Endothelial cell of umbilical vein (primary cell): ENCODE measurements at regions of chr22 and their contacts with region 1.

Region 1: GRCh38 chr22:36239401-36240171 is at the start of gene APOL2:
- DNase-seq: peak; percentile 93
- H3K4me3 ChIP-seq: peak within 1 kb of the TSS; percentile 48 to 82 (median 67)
- H3K27ac ChIP-seq: peak within 1 kb of the TSS; percentile 31
- H3K4me1 ChIP-seq: peaks cover 16% of the 10 kb centered on the region
- H3K27me3 ChIP-seq: no peaks in the 10 kb centered on the region
- CTCF ChIP-seq: peak; percentile 54 to 80
- POLR2A ChIP-seq: peak; percentile 84
- total RNA-seq, gene APOL2: 37.6 and 41.9 TPM in 2 replicates

Region 2: GRCh38 chr22:36110306-36110881 is 129.2 kb before region 1 on chr22:
- CTCF ChIA-PET with region 1: no interaction called
- POLR2A ChIA-PET with region 1: no interaction called
- dilution Hi-C with region 1: no loop called
- intact Hi-C with region 1: no loop called
- DNase-seq: no peak
- H3K4me3 ChIP-seq: no peak overlapping the region
- H3K27ac ChIP-seq: no peak overlapping the region
- H3K4me1 ChIP-seq: no peaks in the 10 kb centered on the region
- H3K27me3 ChIP-seq: peaks cover 7 to 9% of the 10 kb centered on the region in 2 experiments
- CTCF ChIP-seq: no peak
- POLR2A ChIP-seq: no peak

Region 3: GRCh38 chr22:36194971-36195370 is 44.6 kb before region 1 on chr22:
- CTCF ChIA-PET with region 1: interaction called, 18 read pairs
- POLR2A ChIA-PET with region 1: no interaction called
- dilution Hi-C with region 1: no loop called
- intact Hi-C with region 1: no loop called
- DNase-seq: peak; percentile 74
- H3K4me3 ChIP-seq: no peak overlapping the region
- H3K27ac ChIP-seq: no peak overlapping the region
- H3K4me1 ChIP-seq: peaks cover 33% of the 10 kb centered on the region
- H3K27me3 ChIP-seq: peaks cover 0 to 6% of the 10 kb centered on the region in 2 experiments
- CTCF ChIP-seq: peak; percentile 68 to 76
- POLR2A ChIP-seq: no peak

Region 4: GRCh38 chr22:36201630-36202319 is 37.8 kb before region 1 on chr22 and contains the start of gene APOL4:
- CTCF ChIA-PET with region 1: interaction called, 19 read pairs
- POLR2A ChIA-PET with region 1: no interaction called
- dilution Hi-C with region 1: no loop called
- intact Hi-C with region 1: loop called (anchors 2 kb)
- DNase-seq: no peak
- H3K4me3 ChIP-seq: no peak within 1 kb of the TSS
- H3K27ac ChIP-seq: no peak within 1 kb of the TSS
- H3K4me1 ChIP-seq: peaks cover 16% of the 10 kb centered on the region
- H3K27me3 ChIP-seq: peaks cover 0 to 2% of the 10 kb centered on the region in 2 experiments
- CTCF ChIP-seq: no peak
- POLR2A ChIP-seq: no peak
- total RNA-seq, gene APOL4: 0.97 and 2.6 TPM in 2 replicates

Region 5: DNA sequence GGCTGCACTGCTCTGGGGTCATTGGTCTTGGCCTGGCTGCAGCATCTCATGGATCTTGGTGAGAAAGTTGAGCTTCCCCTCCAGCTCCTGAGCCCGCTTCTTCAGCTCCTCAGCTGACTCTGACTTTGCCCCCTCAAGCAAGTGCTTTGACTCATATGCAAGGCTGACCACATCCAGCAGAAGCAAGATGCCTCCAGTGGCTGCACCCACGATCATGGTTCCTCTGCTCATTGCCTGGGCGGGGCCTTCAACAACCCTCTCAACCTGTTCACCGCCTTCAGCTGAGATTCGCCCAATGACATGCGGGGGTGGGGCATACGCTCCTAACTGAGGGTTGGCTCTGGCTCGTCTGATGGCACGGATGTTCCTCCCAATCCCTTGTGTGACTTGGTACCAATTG is 12.2 kb before region 1 on chr22:
- CTCF ChIA-PET with region 1: interaction called, 10 read pairs
- POLR2A ChIA-PET with region 1: no interaction called
- dilution Hi-C with region 1: no loop called
- intact Hi-C with region 1: no loop called
- DNase-seq: no peak
- H3K4me3 ChIP-seq: no peak overlapping the region
- H3K27ac ChIP-seq: no peak overlapping the region
- H3K4me1 ChIP-seq: no peaks in the 10 kb centered on the region
- H3K27me3 ChIP-seq: no peaks in the 10 kb centered on the region
- CTCF ChIP-seq: no peak
- POLR2A ChIP-seq: no peak

Region 6: GRCh38 chr22:36252754-36253517 is 13.3 kb after region 1 on chr22 and contains the start of gene APOL1:
- CTCF ChIA-PET with region 1: interaction called, 20 read pairs
- POLR2A ChIA-PET with region 1: interaction called, 3 read pairs
- dilution Hi-C with region 1: no loop called
- intact Hi-C with region 1: loop called (anchors 1 kb)
- DNase-seq: peak; percentile 69
- H3K4me3 ChIP-seq: peak within 1 kb of the TSS; percentile 32 to 53 (median 42)
- H3K27ac ChIP-seq: no peak within 1 kb of the TSS
- H3K4me1 ChIP-seq: peaks cover 13% of the 10 kb centered on the region
- H3K27me3 ChIP-seq: no peaks in the 10 kb centered on the region
- CTCF ChIP-seq: no peak
- POLR2A ChIP-seq: no peak
- total RNA-seq, gene APOL1: 9.3 and 14.1 TPM in 2 replicates

Region 7: GRCh38 chr22:36258701-36259614 is 19.4 kb after region 1 on chr22:
- CTCF ChIA-PET with region 1: interaction called, 20 read pairs
- POLR2A ChIA-PET with region 1: no interaction called
- dilution Hi-C with region 1: no loop called
- intact Hi-C with region 1: loop called (anchors 1 kb)
- DNase-seq: peak; percentile 68
- H3K4me3 ChIP-seq: no peak overlapping the region
- H3K27ac ChIP-seq: peak overlapping the region; percentile 31
- H3K4me1 ChIP-seq: peaks cover 25% of the 10 kb centered on the region
- H3K27me3 ChIP-seq: no peaks in the 10 kb centered on the region
- CTCF ChIP-seq: no peak
- POLR2A ChIP-seq: no peak

Region 8: DNA sequence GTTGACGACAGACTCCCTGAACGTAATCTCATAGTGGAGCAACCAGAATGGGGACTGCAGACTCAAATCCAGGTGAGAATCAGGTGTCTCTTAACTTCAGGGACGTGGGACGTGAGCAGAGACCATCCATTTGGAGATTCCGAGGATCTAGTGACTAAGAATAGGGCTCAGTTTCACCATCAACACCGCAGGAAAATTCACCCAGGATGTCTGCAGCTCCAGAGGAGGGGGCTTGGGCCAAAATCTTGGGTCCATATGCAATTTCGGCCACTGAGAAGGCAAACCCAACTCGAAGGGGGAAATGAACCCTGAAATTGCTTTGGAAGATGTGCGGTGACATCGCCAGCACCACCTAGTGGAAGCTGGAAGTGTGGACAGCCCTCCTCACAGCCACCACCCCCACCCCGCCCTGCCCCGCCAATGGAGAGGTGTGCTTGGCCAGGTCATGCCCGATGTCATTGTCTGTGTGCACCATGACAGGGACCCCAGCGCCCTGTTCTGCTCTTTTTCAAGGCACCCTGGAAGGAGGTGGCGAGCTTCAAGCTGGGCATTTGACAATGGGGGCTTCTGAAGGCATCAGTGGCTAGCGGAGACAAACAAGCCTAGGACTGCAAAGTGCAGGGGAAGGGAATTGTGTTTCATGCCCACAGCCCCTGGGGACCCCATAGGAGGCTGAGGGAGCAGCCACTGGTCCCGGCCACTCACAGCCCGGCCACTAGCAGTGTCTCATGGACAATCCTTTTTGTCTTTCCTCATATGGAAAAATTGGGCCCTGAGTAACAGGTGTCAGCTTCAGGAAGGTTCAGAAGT is 38.1 kb after region 1 on chr22:
- CTCF ChIA-PET with region 1: interaction called, 27 read pairs
- POLR2A ChIA-PET with region 1: no interaction called
- dilution Hi-C with region 1: no loop called
- intact Hi-C with region 1: loop called (anchors 1 kb)
- DNase-seq: peak; percentile 59
- H3K4me3 ChIP-seq: no peak overlapping the region
- H3K27ac ChIP-seq: no peak overlapping the region
- H3K4me1 ChIP-seq: no peaks in the 10 kb centered on the region
- H3K27me3 ChIP-seq: no peaks in the 10 kb centered on the region
- CTCF ChIP-seq: peak; percentile 65 to 88
- POLR2A ChIP-seq: peak; percentile 18